Esophagus muscularis mucosa (tissue), 4 donors: ENCODE measurements at regions of chr2 and their contacts with region 1.

Region 1: DNA sequence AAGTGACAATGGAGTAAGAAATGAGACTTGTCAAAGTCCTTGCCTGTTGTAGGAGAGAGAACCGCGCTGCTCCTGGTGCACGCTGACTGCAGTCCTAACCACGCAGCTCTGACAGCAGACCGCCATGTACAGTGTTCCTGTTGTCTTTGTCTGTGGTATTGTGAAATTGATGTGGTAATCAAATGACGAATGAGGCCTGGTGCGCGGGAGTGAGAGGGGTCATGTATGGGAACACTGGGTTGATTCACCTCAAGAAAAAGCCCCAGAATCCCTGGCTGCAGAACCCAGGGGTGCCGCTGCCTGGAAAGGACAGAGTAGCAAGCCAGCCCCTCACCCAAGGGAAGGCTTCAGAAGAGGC is 64.0 kb downstream of the INPP4A start:
- DNase-seq: no peak
- H3K4me3 ChIP-seq: no peak overlapping the region
- H3K27ac ChIP-seq: peak overlapping the region; percentile 71 to 85 (median 74)
- H3K4me1 ChIP-seq: peaks cover 52 to 82% (median 64%) of the 10 kb centered on the region in 4 donors
- H3K27me3 ChIP-seq: no peaks in the 10 kb centered on the region
- CTCF ChIP-seq: no peak
- EP300 ChIP-seq: no peak
- POLR2A ChIP-seq: no peak

Region 2: GRCh38 chr2:98454500-98455235 is 54.0 kb before region 1 on chr2:
- intact Hi-C with region 1: loop called (anchors 5 kb)
- DNase-seq: peak; percentile 89
- H3K4me3 ChIP-seq: no peak overlapping the region
- H3K27ac ChIP-seq: peak overlapping the region; percentile 46 to 71 (median 56)
- H3K4me1 ChIP-seq: peaks cover 32 to 95% (median 84%) of the 10 kb centered on the region in 4 donors
- H3K27me3 ChIP-seq: no peaks in the 10 kb centered on the region
- CTCF ChIP-seq: no peak
- EP300 ChIP-seq: no peak
- POLR2A ChIP-seq: no peak

Region 3: GRCh38 chr2:98476192-98476868 is 32.4 kb before region 1 on chr2:
- intact Hi-C with region 1: no loop called
- DNase-seq: no peak
- H3K4me3 ChIP-seq: no peak overlapping the region
- H3K27ac ChIP-seq: no peak overlapping the region
- H3K4me1 ChIP-seq: peaks cover 81 to 100% (median 88%) of the 10 kb centered on the region in 4 donors
- H3K27me3 ChIP-seq: no peaks in the 10 kb centered on the region
- CTCF ChIP-seq: no peak
- EP300 ChIP-seq: no peak
- POLR2A ChIP-seq: no peak